ENCODE measurements at regions of chr6 and their contacts with region 1.

Region 1: DNA sequence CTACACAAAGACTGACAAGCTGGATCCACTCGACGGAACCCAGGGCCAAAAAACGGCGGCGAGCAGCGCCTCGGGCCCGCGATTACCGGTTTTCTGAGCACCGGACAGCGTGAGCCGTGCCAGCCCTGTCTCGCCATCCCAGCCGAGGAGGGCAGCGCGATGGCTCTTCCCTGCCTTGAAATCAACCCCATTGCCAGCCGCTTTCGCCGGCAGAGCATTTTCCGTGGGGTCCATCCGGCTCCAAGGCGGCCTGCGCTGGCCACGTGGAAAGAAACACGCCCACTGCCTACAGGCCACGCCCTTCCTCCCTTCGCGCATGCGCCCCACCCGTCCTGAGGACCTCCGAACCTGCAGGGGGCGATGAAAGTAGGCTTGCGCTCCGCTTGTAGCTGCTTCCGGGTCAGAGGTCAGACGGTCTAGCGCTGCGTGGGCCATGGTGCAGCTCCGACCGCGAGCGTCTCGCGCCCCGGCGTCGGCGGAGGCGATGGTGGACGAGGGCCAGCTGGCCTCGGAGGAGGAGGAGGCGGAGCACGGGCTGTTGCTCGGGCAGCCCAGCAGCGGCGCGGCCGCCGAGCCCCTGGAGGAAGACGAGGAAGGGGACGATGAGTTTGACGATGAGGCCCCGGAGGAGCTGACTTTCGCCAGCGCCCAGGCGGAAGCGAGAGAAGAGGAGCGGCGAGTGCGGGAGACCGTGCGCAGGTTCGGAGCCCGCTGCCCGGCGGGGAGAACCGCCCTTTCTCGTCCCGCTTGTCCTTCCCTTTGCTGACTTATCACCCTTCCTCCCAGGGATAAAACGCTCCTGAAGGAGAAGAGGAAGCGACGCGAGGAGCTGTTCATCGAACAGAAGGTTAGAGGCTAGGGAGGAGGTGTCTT is at the start of gene NOL7:
- DNase-seq: peak; percentile 98
- ATAC-seq: peak; percentile 87
- H3K4me3 ChIP-seq: peak within 1 kb of the TSS; percentile 86
- H3K27ac ChIP-seq: peak within 1 kb of the TSS; percentile 62
- H3K4me1 ChIP-seq: peaks cover 22% of the 10 kb centered on the region
- H3K27me3 ChIP-seq: no peaks in the 10 kb centered on the region
- CTCF ChIP-seq: peak; percentile 89
- total RNA-seq, gene NOL7: 95.4 and 163 TPM in 2 replicates

Region 2: GRCh38 chr6:12973386-12973785 is 641.8 kb before region 1 on chr6:
- CTCF ChIA-PET with region 1: no interaction called
- POLR2A ChIA-PET with region 1: no interaction called
- intact Hi-C with region 1: no loop called
- DNase-seq: peak; percentile 9
- ATAC-seq: no peak
- H3K4me3 ChIP-seq: no peak overlapping the region
- H3K27ac ChIP-seq: no peak overlapping the region
- H3K4me1 ChIP-seq: no peaks in the 10 kb centered on the region
- H3K27me3 ChIP-seq: peaks cover 79% of the 10 kb centered on the region
- CTCF ChIP-seq: no peak

Region 3: DNA sequence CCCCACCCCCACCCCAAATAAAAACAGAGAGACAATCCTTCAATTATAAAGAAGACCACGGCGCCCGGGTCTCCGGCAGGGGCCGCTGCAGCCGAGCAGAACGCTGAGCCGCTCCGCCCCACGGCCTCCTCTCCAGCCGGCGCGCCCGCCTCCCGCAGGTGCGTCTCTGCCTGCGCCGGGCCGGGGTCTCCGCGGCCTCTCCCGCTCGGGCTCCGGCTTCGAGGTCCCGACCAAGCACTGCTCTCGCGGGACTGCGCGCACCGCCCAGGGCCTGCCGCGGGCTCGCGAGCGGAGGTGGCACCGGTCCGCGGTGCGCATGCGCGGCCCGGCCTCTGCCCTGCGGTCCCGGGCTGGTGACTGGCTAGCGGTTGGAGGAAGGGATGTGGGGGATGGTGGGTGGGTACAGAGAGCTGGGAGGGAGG is 41.0 kb before region 1 on chr6:
- CTCF ChIA-PET with region 1: interaction called, 7 read pairs
- POLR2A ChIA-PET with region 1: interaction called, 8 read pairs
- intact Hi-C with region 1: loop called (anchors 1 kb)
- DNase-seq: peak; percentile 95
- ATAC-seq: peak; percentile 81
- H3K4me3 ChIP-seq: peak overlapping the region; percentile 79
- H3K27ac ChIP-seq: peak overlapping the region; percentile 91
- H3K4me1 ChIP-seq: peaks cover 11% of the 10 kb centered on the region
- H3K27me3 ChIP-seq: no peaks in the 10 kb centered on the region
- CTCF ChIP-seq: peak; percentile 39

Region 4: GRCh38 chr6:13681305-13682061 is 66.3 kb after region 1 on chr6:
- CTCF ChIA-PET with region 1: no interaction called
- POLR2A ChIA-PET with region 1: no interaction called
- intact Hi-C with region 1: no loop called
- DNase-seq: no peak
- ATAC-seq: no peak
- H3K4me3 ChIP-seq: no peak overlapping the region
- H3K27ac ChIP-seq: no peak overlapping the region
- H3K4me1 ChIP-seq: no peaks in the 10 kb centered on the region
- H3K27me3 ChIP-seq: no peaks in the 10 kb centered on the region
- CTCF ChIP-seq: no peak

Region 5: GRCh38 chr6:13696226-13696625 is 81.1 kb after region 1 on chr6:
- CTCF ChIA-PET with region 1: interaction called, 13 read pairs
- POLR2A ChIA-PET with region 1: no interaction called
- intact Hi-C with region 1: no loop called
- DNase-seq: peak; percentile 35
- ATAC-seq: no peak
- H3K4me3 ChIP-seq: no peak overlapping the region
- H3K27ac ChIP-seq: no peak overlapping the region
- H3K4me1 ChIP-seq: peaks cover 9% of the 10 kb centered on the region
- H3K27me3 ChIP-seq: no peaks in the 10 kb centered on the region
- CTCF ChIP-seq: no peak

Region 6: DNA sequence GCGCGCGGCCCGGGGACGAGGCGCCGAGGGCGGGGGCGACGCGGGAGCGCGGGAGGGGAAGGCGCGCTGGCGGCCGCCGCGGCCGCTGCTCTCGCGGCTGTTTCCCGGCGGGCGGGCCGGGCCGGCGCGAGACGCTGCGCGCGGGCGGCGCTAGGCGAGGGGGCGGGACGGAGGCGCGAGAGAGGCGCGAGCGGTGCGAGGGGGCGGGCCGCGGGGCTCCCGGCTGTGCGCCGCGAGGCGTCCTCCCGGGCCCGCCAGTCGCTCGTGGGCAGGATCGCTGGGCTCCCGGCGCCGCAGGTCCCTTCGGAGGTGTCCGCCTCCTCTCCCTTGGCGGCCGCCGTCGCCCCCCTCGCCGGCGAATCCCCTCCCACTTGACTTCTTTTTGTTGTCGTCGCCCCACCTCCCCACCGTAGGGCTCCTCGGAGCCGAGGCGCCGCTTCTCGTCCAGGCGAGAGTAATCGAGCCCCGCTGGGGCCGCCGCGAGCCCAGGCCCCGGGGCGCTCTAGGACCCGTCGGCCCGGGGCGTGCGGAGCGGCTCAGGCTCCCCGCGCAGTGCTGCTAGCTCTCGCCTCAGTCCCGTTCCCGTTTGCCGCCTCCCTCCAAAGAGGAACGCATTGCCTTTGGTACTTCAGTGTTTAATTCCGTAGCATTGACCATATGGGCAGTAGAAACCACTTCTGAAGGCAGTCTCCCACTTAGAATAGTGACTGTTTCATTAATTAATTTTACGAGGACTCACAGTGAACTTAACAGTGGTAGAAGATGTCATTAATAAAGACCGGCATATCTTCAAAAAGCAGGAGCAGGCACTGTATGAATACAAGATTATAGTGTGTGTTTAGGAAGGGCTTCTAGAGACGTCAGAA is 96.8 kb after region 1 on chr6 and contains the start of gene RANBP9:
- CTCF ChIA-PET with region 1: interaction called, 4 read pairs
- POLR2A ChIA-PET with region 1: interaction called, 3 read pairs
- intact Hi-C with region 1: loop called (anchors 1 kb)
- DNase-seq: peak; percentile 88
- ATAC-seq: peak; percentile 78
- H3K4me3 ChIP-seq: peak within 1 kb of the TSS; percentile 87
- H3K27ac ChIP-seq: peak within 1 kb of the TSS; percentile 80
- H3K4me1 ChIP-seq: peaks cover 32% of the 10 kb centered on the region
- H3K27me3 ChIP-seq: no peaks in the 10 kb centered on the region
- CTCF ChIP-seq: no peak
- total RNA-seq, gene RANBP9: 25.8 and 27.9 TPM in 2 replicates

Region 7: DNA sequence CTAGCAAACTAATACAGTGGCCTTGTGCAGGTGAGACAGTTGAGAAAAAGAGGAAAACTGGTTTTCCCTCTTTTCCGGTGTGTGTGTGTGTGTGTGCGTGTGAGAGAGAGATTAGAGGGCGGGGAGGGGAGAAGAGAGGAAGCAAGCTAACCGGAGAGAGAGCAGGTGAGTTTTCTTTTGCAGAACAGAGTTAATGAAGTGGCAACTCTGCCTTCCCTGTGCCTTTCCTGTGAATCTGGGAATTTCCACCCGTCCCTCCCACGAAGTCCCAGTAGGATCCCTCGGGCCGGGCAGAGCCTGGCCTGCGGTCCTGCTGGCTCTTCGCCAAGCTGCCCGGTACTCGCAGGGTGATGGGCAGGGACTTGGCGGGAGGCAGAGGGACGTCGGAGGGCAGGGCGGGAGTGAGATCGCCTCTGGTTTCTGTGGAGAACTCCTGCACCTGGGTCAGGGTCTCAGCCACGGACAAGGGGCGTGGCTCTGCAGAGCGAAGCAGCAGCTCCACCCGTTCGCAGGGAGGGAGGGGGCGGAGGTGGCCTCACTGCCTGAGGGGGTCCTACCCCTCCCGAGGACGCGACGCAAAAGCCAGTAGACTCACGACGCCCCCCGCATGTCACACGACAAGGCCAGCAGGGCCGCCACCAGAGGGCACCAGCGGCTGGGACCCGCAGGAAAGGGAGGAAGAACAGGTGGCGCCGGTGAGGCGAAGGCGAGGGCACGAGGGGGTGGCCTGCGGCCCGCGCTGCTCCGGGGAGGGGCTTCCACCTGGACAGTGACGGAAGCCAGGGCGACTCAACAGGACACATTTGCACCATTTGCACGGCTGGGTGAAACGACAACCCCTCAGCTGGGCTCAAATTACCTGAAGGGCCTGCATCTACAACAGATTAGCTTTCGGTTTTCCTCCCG is 258.4 kb after region 1 on chr6:
- CTCF ChIA-PET with region 1: no interaction called
- POLR2A ChIA-PET with region 1: no interaction called
- intact Hi-C with region 1: loop called (anchors 5 kb)
- DNase-seq: peak; percentile 79
- ATAC-seq: peak; percentile 85
- H3K4me3 ChIP-seq: peak overlapping the region; percentile 64
- H3K27ac ChIP-seq: peak overlapping the region; percentile 26
- H3K4me1 ChIP-seq: peaks cover 18% of the 10 kb centered on the region
- H3K27me3 ChIP-seq: no peaks in the 10 kb centered on the region
- CTCF ChIP-seq: peak; percentile 99

Measured in PC-3 (cell line).